ENCODE measurements at regions of chr12 and their contacts with region 1.

Region 1: GRCh38 chr12:120961604-120962531 is 16.5 kb upstream of the HNF1A start:
- DNase-seq: peak; percentile 23
- H3K4me3 Mint-ChIP-seq: no peak overlapping the region
- H3K27ac Mint-ChIP-seq: peak overlapping the region; percentile 50
- H3K4me1 Mint-ChIP-seq: peaks cover 42% of the 10 kb centered on the region
- H3K27me3 Mint-ChIP-seq: no peaks in the 10 kb centered on the region

Region 2: DNA sequence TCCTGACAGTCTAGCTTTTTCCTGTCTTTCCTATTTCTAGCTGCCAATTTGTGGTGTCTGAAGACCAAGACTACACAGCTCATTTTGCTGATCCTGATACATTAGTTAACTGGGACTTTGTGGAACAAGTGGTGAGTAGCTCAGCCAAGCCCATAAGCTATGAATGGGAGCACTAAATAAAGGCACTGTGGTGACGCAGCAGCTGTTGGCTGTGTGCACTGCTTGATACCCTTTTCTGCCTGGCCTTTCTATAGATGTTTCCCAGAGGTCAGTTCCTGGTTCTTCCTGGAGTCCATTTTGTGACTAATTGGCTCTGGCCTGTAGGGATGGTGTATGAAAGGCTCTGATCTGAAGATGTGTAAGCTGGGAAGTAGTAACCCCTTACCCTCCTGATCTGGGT is 407.2 kb before region 1 on chr12:
- CTCF ChIA-PET with region 1: no interaction called
- intact Hi-C with region 1: no loop called
- DNase-seq: no peak
- H3K4me3 Mint-ChIP-seq: no peak overlapping the region
- H3K27ac Mint-ChIP-seq: no peak overlapping the region
- H3K4me1 Mint-ChIP-seq: peaks cover 2% of the 10 kb centered on the region
- H3K27me3 Mint-ChIP-seq: no peaks in the 10 kb centered on the region

Region 3: DNA sequence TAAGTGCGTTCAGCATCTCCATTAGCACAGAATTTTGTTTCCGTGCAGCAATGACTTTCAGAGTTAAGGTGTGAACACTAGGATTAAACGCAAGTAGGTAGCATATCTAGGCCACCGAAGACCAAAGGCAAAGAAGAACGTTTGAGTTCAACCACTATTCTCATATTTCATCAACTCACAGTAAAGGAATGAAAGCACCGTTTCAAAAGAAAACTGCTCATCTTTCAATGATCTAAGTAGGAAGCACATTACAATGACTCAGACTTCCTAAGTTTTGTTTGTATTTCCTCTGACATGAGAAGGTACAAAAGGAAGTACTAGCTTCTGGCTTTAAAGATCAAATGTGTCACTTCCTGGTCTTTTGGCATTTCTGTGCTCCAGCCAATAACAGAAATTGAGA is 178.7 kb before region 1 on chr12:
- CTCF ChIA-PET with region 1: no interaction called
- intact Hi-C with region 1: loop called (anchors 1 kb)
- DNase-seq: peak; percentile 49
- H3K4me3 Mint-ChIP-seq: no peak overlapping the region
- H3K27ac Mint-ChIP-seq: peak overlapping the region; percentile 53
- H3K4me1 Mint-ChIP-seq: peaks cover 25% of the 10 kb centered on the region
- H3K27me3 Mint-ChIP-seq: no peaks in the 10 kb centered on the region

Region 4: GRCh38 chr12:120944645-120945231 is 17.1 kb before region 1 on chr12:
- CTCF ChIA-PET with region 1: interaction called, 8 read pairs
- intact Hi-C with region 1: loop called (anchors 1 kb)
- DNase-seq: peak; percentile 85
- H3K4me3 Mint-ChIP-seq: no peak overlapping the region
- H3K27ac Mint-ChIP-seq: no peak overlapping the region
- H3K4me1 Mint-ChIP-seq: peaks cover 6% of the 10 kb centered on the region
- H3K27me3 Mint-ChIP-seq: no peaks in the 10 kb centered on the region

Region 5: GRCh38 chr12:121033625-121034349 is 71.9 kb after region 1 on chr12:
- CTCF ChIA-PET with region 1: no interaction called
- intact Hi-C with region 1: loop called (anchors 1 kb)
- DNase-seq: peak; percentile 82
- H3K4me3 Mint-ChIP-seq: no peak overlapping the region
- H3K27ac Mint-ChIP-seq: peak overlapping the region; percentile 58
- H3K4me1 Mint-ChIP-seq: peaks cover 52% of the 10 kb centered on the region
- H3K27me3 Mint-ChIP-seq: no peaks in the 10 kb centered on the region

Region 6: DNA sequence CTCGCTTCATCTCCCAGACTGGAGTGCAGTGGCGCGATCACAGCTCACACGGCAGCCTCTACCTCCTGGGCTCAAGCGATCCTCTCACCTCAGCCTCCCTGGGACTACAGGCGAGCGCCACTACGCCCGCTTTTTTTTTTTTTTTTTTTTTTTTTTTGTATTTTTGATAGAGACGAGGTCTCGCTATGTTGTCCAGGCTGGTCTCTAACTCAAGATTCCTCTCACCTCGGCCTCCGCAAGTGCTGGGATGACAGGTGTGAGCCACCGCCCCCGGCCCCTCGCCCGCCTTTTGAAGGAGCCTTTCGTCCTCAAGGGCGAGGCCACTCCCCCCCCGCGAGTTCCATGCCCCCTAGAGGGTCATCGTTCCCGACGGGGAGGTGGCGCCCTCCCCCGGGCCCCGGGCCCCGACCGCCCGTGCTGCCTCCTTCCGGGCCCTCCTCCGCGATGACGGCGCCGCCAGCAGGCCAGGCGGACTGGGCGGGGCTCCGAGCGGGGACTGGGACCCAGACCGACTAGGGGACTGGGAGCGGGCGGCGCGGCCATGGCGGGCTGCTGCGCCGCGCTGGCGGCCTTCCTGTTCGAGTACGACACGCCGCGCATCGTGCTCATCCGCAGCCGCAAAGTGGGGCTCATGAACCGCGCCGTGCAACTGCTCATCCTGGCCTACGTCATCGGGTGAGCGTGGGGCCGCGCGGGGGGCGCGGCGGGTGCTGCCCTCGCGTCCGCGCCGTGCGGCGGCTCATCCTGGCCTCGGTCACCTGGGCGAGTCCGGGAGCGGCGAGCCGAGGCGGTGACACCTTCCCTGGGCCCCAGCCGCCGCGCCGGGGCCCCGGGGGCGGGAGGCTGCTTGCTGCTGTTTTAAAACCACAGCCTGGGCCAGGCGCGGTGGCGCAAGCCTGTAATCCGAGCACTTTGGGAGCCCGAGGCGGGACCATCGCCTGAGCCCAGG is 248.0 kb after region 1 on chr12 and contains the start of gene P2RX4:
- CTCF ChIA-PET with region 1: no interaction called
- intact Hi-C with region 1: loop called (anchors 1 kb)
- DNase-seq: peak; percentile 91
- H3K4me3 Mint-ChIP-seq: peak within 1 kb of the TSS; percentile 81
- H3K27ac Mint-ChIP-seq: peak within 1 kb of the TSS; percentile 89
- H3K4me1 Mint-ChIP-seq: peaks cover 23% of the 10 kb centered on the region
- H3K27me3 Mint-ChIP-seq: no peaks in the 10 kb centered on the region
- total RNA-seq, gene P2RX4: 14.2 to 18.0 TPM

Measured in activated naive CD4-positive, alpha-beta T cell treated with anti-CD3 and anti-CD28 coated beads for 36 hours (primary cell).